ENCODE measurements at regions of chr13 and their contacts with region 1.

Region 1: GRCh38 chr13:20505405-20506366 is 20.0 kb downstream of the CRYL1 start:
- DNase-seq: no peak
- ATAC-seq: no peak
- H3K4me3 ChIP-seq: no peak overlapping the region
- H3K27ac ChIP-seq: no peak overlapping the region
- H3K4me1 ChIP-seq: no peaks in the 10 kb centered on the region
- H3K27me3 ChIP-seq: no peaks in the 10 kb centered on the region
- CTCF ChIP-seq: no peak
- EP300 ChIP-seq: no peak
- POLR2A ChIP-seq: no peak
- RAD21 ChIP-seq: no peak

Region 2: DNA sequence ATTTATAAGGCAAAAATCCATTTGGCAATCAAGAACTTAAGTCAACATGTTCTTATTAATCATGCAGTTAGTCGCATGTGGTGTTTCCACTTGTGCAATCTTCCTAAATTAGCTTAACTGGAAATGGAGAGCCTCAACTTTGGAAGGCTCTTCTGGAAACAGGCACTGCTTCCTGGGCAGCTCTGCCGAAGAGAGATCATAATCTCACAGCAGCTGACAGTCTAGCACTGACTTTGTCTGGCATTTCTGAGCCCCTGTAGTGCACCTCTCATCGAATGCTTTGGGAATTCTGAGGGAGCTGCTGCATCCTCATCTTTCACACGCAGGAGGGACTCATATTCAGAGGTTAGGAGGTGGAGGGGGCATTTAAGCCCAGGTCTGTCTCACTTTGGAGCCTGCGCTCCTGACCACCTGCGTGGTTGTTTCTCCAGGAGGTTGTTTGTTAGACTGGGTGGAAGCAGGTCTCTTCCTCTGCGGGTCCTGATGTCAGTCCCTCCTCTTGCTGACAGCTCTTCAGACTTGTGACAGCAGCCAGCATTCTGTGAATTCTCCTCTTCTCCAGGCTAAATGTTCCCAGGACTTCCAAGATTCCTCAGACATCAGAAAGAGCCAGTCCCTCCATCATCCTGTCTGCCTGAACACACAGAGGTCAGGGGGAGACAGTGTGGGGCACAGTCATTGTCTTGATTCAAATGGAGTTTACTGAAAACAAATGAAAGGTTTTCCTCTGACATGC is 173.2 kb before region 1 on chr13:
- CTCF ChIA-PET with region 1: no interaction called
- POLR2A ChIA-PET with region 1: no interaction called
- in situ Hi-C with region 1: no loop called
- intact Hi-C with region 1: no loop called
- DNase-seq: no peak
- ATAC-seq: no peak
- H3K4me3 ChIP-seq: no peak overlapping the region
- H3K27ac ChIP-seq: no peak overlapping the region
- H3K4me1 ChIP-seq: no peaks in the 10 kb centered on the region
- H3K27me3 ChIP-seq: peaks cover 0 to 15% of the 10 kb centered on the region in 2 experiments; a peak in 1 of 5 replicates
- CTCF ChIP-seq: no peak
- EP300 ChIP-seq: no peak
- POLR2A ChIP-seq: no peak
- RAD21 ChIP-seq: no peak

Region 3: DNA sequence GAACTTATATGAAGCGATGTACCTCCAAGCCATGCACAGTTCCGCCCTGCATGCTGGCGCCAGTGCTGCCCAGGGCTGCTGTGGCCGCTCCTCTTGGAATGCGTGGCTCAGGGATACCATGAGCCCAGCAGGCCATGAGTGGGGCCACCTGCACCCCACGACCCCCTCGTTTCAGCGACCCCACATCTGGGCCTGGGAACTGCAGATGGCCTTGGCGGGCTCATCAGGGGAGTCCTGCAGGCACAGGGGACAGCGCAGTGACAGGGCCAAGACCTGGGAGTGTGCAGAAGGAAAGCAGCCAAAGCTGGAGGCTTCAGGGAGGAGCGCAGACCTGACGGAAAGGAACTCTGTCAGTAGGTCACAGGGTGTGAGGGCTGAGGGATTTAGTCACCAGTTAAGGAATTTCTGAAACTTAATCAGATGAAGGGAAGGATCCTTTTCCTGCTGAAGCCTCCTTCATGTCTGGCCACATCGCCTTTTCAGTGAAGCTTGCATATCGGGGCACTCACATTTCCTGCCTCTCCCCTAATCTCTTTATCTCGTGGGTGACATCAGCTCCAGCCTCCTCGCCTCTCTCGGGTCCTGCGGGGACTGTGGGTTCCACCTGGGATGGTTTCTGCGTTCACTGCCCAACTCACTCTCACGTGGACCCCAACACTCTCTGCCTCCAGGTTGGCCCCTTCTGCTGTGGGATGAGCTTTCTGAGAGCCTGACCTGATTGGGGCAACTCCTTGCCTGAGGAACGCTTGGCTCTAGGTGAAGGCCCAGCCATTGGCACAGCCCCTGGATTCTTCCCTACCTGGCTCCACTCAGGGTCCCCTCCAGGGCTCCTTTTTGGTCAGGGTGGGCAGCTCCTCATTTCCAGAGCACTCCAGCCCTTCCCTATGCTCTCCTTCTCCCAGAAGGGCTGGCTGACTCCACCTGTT is 103.5 kb before region 1 on chr13:
- CTCF ChIA-PET with region 1: no interaction called
- POLR2A ChIA-PET with region 1: no interaction called
- in situ Hi-C with region 1: no loop called
- intact Hi-C with region 1: no loop called
- DNase-seq: no peak
- ATAC-seq: no peak
- H3K4me3 ChIP-seq: no peak overlapping the region
- H3K27ac ChIP-seq: no peak overlapping the region
- H3K4me1 ChIP-seq: peaks cover 0 to 5% of the 10 kb centered on the region in 2 experiments; a peak in 2 of 5 replicates
- H3K27me3 ChIP-seq: peaks cover 0 to 17% of the 10 kb centered on the region in 2 experiments; a peak in 2 of 5 replicates
- CTCF ChIP-seq: no peak
- EP300 ChIP-seq: no peak
- POLR2A ChIP-seq: no peak
- RAD21 ChIP-seq: no peak

Region 4: GRCh38 chr13:20828539-20829364 is 323.1 kb after region 1 on chr13:
- CTCF ChIA-PET with region 1: interaction called, 3 read pairs
- POLR2A ChIA-PET with region 1: no interaction called
- in situ Hi-C with region 1: loop called (anchors 10 kb)
- intact Hi-C with region 1: no loop called
- DNase-seq: peak in 2 of 4 experiments; percentile 22 to 47
- ATAC-seq: peak; percentile 59; the same call in 2 of the 3 replicates
- H3K4me3 ChIP-seq: no peak overlapping the region
- H3K27ac ChIP-seq: no peak overlapping the region
- H3K4me1 ChIP-seq: no peaks in the 10 kb centered on the region
- H3K27me3 ChIP-seq: no peaks in the 10 kb centered on the region
- CTCF ChIP-seq: peak; percentile 53 to 61 (median 57); a peak in 5 of 6 replicates
- EP300 ChIP-seq: no peak
- POLR2A ChIP-seq: no peak
- RAD21 ChIP-seq: peak; percentile 55 to 63

Measured in K562 (cell line).